ENCODE measurements at regions of chr5 and their contacts with region 1.

Region 1: DNA sequence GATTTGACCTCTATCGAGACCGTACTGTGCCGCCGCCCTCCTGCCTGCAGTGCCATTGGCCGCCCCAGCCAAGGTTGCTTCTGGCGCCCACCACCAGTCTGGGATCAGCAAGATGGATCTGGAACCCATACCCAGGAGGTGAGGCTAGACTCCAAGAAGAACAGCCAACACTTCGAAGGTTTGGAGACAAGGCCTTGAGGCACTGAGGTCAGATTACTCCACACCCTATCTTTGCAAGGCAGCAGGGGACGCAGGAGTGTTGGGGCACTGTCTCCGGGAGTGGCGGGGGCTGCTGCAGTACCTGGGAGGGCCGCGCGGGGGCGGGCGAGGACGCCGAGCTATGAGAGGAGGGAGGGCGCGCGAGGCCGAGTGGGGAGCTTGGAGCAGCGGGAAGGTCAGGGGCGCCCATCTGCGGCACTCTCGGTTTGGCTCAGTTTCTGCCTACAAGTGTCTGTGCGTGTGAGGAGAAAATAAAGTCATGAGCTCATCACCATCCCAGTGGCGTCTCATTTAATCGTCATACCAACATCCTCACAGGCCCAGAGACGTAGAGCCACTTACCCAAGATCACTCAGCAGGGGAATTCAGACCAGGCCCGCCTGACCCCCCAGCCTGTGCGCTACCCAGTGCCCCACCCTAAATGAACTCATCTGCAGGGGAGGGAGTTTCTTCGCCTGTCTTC is 20.5 kb upstream of the PSD2 start:
- DNase-seq: peak; percentile 92
- ATAC-seq: peak; percentile 95
- H3K4me3 Mint-ChIP-seq: no peak overlapping the region
- H3K27ac Mint-ChIP-seq: peak overlapping the region; percentile 58
- H3K4me1 Mint-ChIP-seq: peaks cover 10% of the 10 kb centered on the region
- H3K27me3 Mint-ChIP-seq: peaks cover 9% of the 10 kb centered on the region

Region 2: DNA sequence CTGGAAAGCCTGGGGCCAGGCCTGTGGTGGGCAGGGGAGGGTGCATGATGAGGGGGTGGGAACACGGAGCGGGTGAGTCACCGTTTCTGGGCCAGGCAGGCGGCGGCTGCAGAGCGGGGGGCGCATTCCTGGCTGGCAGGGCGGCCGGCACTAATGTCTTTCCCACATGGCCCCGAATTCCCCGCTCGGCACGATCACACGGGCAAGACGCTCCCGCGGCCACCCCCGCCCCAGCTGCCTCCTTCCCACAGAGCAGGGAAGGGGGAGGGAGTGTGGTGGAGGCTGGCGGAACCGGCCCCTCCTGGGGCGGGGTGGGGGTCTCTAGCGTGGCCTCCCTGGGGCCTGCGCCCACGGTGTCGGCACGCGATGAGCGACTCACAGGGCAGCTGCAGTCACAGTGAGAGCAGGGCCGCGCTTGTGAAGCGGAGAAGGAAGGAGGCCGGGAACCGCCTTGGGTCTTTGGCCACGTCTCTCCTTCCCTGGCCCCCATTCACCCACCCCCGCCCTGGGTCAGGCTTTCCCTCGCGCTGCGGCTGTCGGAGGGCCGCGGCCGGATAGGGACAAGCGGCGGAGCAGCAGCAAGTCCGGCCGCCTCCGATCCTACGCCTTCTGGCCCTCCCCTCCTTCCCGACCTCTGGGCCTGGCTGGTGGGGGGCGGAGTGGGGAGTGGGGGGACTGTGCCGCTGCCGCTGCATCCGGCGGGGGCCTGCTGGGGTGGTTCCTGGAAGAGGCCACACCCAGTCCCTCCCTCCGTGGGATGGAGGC is 78.0 kb before region 1 on chr5:
- CTCF ChIA-PET with region 1: no interaction called
- POLR2A ChIA-PET with region 1: no interaction called
- intact Hi-C with region 1: no loop called
- DNase-seq: peak; percentile 52
- ATAC-seq: peak; percentile 47
- H3K4me3 Mint-ChIP-seq: no peak overlapping the region
- H3K27ac Mint-ChIP-seq: no peak overlapping the region
- H3K4me1 Mint-ChIP-seq: peaks cover 15% of the 10 kb centered on the region
- H3K27me3 Mint-ChIP-seq: peaks cover 13% of the 10 kb centered on the region

Region 3: DNA sequence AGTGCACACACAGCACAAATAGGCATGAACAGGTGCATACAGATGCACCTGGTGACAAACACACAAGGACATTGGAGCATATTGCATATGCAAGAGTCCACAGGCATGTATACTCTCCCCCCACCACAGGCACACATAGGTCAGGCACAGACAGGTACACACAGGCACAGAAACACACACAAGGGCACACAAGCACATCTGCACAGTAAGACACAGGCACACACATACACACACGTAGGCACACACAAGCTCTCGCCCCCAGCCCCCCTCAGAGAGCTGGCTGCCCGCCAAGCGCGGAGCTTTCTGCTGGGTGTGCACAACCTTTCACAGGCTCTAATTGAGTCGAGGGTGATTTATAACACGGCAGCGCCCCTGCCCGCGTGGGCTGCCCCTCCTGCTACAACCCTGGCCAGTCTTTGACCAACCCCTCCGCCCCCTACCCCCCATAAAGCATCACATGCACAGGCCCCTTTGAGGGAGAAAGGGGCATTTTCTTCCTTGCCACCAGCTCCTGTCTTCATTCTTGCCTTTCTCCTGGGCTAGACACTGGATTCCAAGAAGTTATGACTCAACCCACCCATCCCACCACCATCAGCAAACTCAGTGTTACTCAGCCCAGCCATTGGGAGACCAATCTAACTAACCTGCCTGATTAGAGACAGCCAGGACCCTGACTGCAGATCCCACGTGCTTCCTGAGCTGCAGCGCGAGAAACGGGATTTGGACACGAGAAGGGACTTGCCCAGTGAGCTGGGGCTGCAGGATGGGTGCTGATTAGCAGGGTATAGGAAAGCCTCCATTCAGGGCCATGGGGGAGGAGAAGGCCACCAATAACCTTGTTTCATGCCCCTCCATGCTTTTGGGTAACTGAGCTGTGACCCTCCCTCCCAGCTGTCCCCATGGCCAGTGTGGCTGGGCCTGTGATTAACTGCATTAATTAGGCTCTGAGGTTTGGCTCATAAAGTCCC is 22.3 kb before region 1 on chr5:
- CTCF ChIA-PET with region 1: interaction called, 11 read pairs
- POLR2A ChIA-PET with region 1: no interaction called
- intact Hi-C with region 1: no loop called
- DNase-seq: peak; percentile 42
- ATAC-seq: peak; percentile 57
- H3K4me3 Mint-ChIP-seq: no peak overlapping the region
- H3K27ac Mint-ChIP-seq: no peak overlapping the region
- H3K4me1 Mint-ChIP-seq: peaks cover 24% of the 10 kb centered on the region
- H3K27me3 Mint-ChIP-seq: peaks cover 30% of the 10 kb centered on the region

Region 4: GRCh38 chr5:139795074-139796001 is 20.2 kb after region 1 on chr5 and contains the start of gene PSD2:
- CTCF ChIA-PET with region 1: interaction called, 16 read pairs
- POLR2A ChIA-PET with region 1: no interaction called
- intact Hi-C with region 1: no loop called
- DNase-seq: peak; percentile 44
- ATAC-seq: peak; percentile 56
- H3K4me3 Mint-ChIP-seq: no peak within 1 kb of the TSS
- H3K27ac Mint-ChIP-seq: no peak within 1 kb of the TSS
- H3K4me1 Mint-ChIP-seq: peaks cover 2% of the 10 kb centered on the region
- H3K27me3 Mint-ChIP-seq: peaks cover 52% of the 10 kb centered on the region
- total RNA-seq, gene PSD2: not detected